ENCODE measurements at regions of chr14 and their contacts with region 1.

Region 1: DNA sequence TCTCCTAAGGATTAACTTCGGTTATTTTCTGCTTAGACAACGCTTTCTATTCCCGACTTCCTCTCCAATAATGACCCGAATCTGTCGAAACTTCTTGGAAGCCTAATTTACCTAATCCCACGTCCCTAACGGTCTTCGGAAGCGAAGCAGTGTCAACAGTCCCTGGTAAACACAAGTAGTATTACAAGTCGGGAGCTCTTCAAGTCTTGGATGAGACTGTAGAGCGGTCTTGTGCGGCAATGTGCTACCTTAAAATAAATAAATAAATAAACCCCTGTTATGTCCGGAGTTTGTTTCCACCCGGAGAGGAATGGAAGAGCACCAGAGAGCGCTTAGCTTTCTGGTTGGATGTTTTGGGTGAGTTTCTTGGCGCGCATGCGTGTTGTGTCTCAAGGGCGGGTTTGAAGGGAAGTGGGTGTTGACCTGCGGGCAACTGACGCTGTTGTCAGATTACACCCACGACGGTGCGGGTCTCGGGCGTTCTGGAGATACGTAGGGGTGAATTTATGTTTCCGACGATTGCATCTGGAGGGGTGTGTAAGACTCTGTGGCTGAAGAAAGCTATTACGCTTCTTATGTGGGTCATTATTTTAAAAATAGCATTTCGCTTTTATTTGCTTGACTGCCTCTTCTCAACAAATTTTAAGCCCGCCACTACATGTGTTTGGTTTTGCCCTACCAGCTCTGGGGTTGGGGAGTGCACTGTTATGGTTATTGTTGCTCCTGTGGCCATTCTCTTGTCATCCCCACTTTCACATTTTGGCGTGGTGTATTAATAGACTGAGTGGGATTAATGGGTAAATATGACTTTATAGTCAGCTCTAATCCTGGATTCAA is at the starts of genes KIAA0586 and TIMM9:
- DNase-seq: peak; percentile 97
- H3K4me3 ChIP-seq: peak within 1 kb of the TSS; percentile 87 to 95 (median 93)
- H3K27ac ChIP-seq: peak within 1 kb of the TSS; percentile 97
- H3K4me1 ChIP-seq: peaks cover 22% of the 10 kb centered on the region
- H3K27me3 ChIP-seq: no peaks in the 10 kb centered on the region
- CTCF ChIP-seq: no peak
- total RNA-seq, gene KIAA0586: 14.3 to 16.2 TPM
- total RNA-seq, gene TIMM9: 39.5 to 50.8 TPM

Region 2: DNA sequence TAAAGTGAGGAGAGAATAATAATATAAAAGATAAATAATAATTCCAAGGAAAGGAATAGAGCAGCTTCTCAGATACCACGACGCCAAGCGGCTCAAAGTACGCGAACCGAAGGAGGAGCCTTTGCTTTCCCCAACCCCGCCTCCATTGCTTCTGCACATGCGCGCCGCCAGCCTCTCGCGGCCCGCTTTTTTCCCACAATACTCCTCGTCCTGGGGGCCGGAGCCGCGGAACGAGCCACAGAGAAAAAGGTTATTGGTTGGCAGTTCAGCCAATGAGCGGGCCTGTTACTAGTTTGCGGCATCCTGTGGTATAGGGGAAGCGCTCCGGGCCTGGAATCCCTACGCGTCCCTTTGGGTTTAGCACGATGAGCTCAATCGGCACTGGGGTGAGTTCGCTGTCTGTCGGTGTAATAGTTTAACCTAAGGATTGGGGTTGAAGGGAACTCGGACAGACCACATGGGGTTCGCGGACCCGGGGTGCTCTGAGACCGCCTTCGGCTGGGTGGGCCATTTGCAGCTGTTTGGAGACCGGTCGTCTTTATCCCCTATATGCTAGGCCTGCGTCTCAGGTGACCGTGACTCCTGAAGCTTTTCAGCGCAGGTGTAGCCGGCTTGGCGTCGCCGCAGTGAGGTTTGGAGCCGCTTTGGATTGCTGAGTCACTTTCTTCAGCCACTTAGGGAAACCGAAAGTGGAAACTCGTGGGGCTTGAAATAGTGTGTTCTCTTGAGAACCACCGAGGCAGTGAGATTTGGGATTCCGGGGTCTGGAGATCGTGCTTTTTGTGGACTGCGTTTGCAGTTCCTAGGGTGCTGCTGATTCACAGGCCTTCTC is 182.7 kb before region 1 on chr14 and contains the start of gene PSMA3:
- CTCF ChIA-PET with region 1: no interaction called
- dilution Hi-C with region 1: no loop called
- in situ Hi-C with region 1: no loop called
- intact Hi-C with region 1: no loop called
- DNase-seq: peak; percentile 98
- H3K4me3 ChIP-seq: peak within 1 kb of the TSS; percentile 81 to 100 (median 96)
- H3K27ac ChIP-seq: peak within 1 kb of the TSS; percentile 93
- H3K4me1 ChIP-seq: peaks cover 18% of the 10 kb centered on the region
- H3K27me3 ChIP-seq: no peaks in the 10 kb centered on the region
- CTCF ChIP-seq: peak in 1 of 2 donors; percentile 16
- total RNA-seq, gene PSMA3: 69.8 to 157 TPM

Region 3: GRCh38 chr14:58353516-58354299 is 73.8 kb before region 1 on chr14:
- CTCF ChIA-PET with region 1: no interaction called
- dilution Hi-C with region 1: no loop called
- in situ Hi-C with region 1: no loop called
- intact Hi-C with region 1: no loop called
- DNase-seq: no peak
- H3K4me3 ChIP-seq: no peak overlapping the region
- H3K27ac ChIP-seq: no peak overlapping the region
- H3K4me1 ChIP-seq: no peaks in the 10 kb centered on the region
- H3K27me3 ChIP-seq: no peaks in the 10 kb centered on the region
- CTCF ChIP-seq: no peak

Region 4: GRCh38 chr14:58414845-58415244 is 12.7 kb before region 1 on chr14:
- CTCF ChIA-PET with region 1: interaction called, 14 read pairs
- dilution Hi-C with region 1: no loop called
- in situ Hi-C with region 1: no loop called
- intact Hi-C with region 1: no loop called
- DNase-seq: no peak
- H3K4me3 ChIP-seq: no peak overlapping the region
- H3K27ac ChIP-seq: no peak overlapping the region
- H3K4me1 ChIP-seq: no peaks in the 10 kb centered on the region
- H3K27me3 ChIP-seq: no peaks in the 10 kb centered on the region
- CTCF ChIP-seq: peak in 1 of 2 donors; percentile 5

Measured in mammary epithelial cell (primary cell).